B cell (primary cell): ENCODE measurements at regions of chr12 and their contacts with region 1.

Region 1: DNA sequence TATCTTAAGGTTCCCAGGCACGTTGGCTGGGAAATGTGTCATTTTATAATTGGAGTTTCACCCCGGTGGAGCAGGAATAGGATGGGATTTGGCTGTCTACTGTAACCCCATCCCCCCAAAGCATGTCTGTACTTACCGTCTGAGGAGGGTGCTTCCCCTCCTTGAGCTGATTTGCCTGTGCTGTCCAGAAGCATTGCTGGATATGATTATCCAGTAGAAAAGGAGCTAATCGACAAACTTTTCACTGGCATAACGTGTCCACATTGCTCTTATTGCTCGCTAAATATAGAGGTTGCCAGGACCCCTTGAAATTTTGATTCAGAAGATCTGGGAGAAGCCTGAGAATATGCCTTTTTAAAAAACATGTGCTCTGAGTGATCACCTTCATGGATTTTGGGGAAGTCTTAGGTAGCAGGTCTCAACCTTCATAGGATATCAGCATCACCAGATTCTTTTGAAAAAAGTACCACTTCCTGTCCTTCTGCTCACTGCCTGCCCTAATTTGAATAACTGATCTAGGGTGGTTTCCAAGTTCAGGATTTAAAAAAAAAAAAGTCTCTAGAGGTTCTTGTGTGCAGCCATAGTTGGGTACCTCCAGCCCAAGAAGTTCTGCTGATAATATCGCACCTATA is 80.4 kb upstream of the KCNA1 start:
- DNase-seq: peak; percentile 87
- ATAC-seq: peak; percentile 88
- H3K4me3 ChIP-seq: peak overlapping the region; percentile 17 to 61 (median 38)
- H3K4me3 Mint-ChIP-seq: peak overlapping the region; percentile 82
- H3K27ac ChIP-seq: peak overlapping the region; percentile 76 to 87
- H3K27ac Mint-ChIP-seq: peak overlapping the region; percentile 93
- H3K4me1 ChIP-seq: peaks cover 85% of the 10 kb centered on the region in 2 donors
- H3K4me1 Mint-ChIP-seq: peaks cover 85% of the 10 kb centered on the region
- H3K27me3 ChIP-seq: no peaks in the 10 kb centered on the region
- H3K27me3 Mint-ChIP-seq: no peaks in the 10 kb centered on the region
- CTCF ChIP-seq: no peak

Region 2: GRCh38 chr12:4562034-4562657 is 267.1 kb before region 1 on chr12 and contains the start of gene DYRK4:
- CTCF ChIA-PET with region 1: no interaction called
- POLR2A ChIA-PET with region 1: no interaction called
- intact Hi-C with region 1: loop called (anchors 10 kb)
- DNase-seq: peak; percentile 33
- ATAC-seq: no peak
- H3K4me3 ChIP-seq: peak within 1 kb of the TSS in 3 of 5 experiments; percentile 23 to 40 (median 35)
- H3K4me3 Mint-ChIP-seq: peak within 1 kb of the TSS; percentile 64
- H3K27ac ChIP-seq: no peak within 1 kb of the TSS
- H3K27ac Mint-ChIP-seq: peak within 1 kb of the TSS; percentile 27
- H3K4me1 ChIP-seq: peaks cover 44 to 52% of the 10 kb centered on the region in 2 donors
- H3K4me1 Mint-ChIP-seq: peaks cover 44% of the 10 kb centered on the region
- H3K27me3 ChIP-seq: no peaks in the 10 kb centered on the region
- H3K27me3 Mint-ChIP-seq: no peaks in the 10 kb centered on the region
- CTCF ChIP-seq: no peak
- total RNA-seq, gene DYRK4: 34.4 and 41.3 TPM in 2 replicates

Region 3: GRCh38 chr12:4630262-4630661 is 199.0 kb before region 1 on chr12:
- CTCF ChIA-PET with region 1: no interaction called
- POLR2A ChIA-PET with region 1: no interaction called
- intact Hi-C with region 1: no loop called
- DNase-seq: no peak
- ATAC-seq: no peak
- H3K4me3 ChIP-seq: no peak overlapping the region
- H3K4me3 Mint-ChIP-seq: no peak overlapping the region
- H3K27ac ChIP-seq: no peak overlapping the region
- H3K27ac Mint-ChIP-seq: no peak overlapping the region
- H3K4me1 ChIP-seq: no peaks in the 10 kb centered on the region
- H3K4me1 Mint-ChIP-seq: no peaks in the 10 kb centered on the region
- H3K27me3 ChIP-seq: no peaks in the 10 kb centered on the region
- H3K27me3 Mint-ChIP-seq: peaks cover 4% of the 10 kb centered on the region
- CTCF ChIP-seq: no peak

Region 4: GRCh38 chr12:4648501-4649357 is 180.5 kb before region 1 on chr12 and contains the starts of genes AKAP3 and NDUFA9:
- CTCF ChIA-PET with region 1: no interaction called
- POLR2A ChIA-PET with region 1: no interaction called
- intact Hi-C with region 1: loop called (anchors 5 kb)
- DNase-seq: peak; percentile 89
- ATAC-seq: peak; percentile 97
- H3K4me3 ChIP-seq: peak within 1 kb of the TSS; percentile 83 to 97 (median 90)
- H3K4me3 Mint-ChIP-seq: peak within 1 kb of the TSS; percentile 91
- H3K27ac ChIP-seq: peak within 1 kb of the TSS; percentile 62 to 83
- H3K27ac Mint-ChIP-seq: peak within 1 kb of the TSS; percentile 86
- H3K4me1 ChIP-seq: peaks cover 20 to 22% of the 10 kb centered on the region in 2 donors
- H3K4me1 Mint-ChIP-seq: peaks cover 52% of the 10 kb centered on the region
- H3K27me3 ChIP-seq: no peaks in the 10 kb centered on the region
- H3K27me3 Mint-ChIP-seq: no peaks in the 10 kb centered on the region
- CTCF ChIP-seq: no peak
- total RNA-seq, gene AKAP3: 3.8 and 4.6 TPM in 2 replicates
- total RNA-seq, gene NDUFA9: 73.3 and 74.2 TPM in 2 replicates

Region 5: DNA sequence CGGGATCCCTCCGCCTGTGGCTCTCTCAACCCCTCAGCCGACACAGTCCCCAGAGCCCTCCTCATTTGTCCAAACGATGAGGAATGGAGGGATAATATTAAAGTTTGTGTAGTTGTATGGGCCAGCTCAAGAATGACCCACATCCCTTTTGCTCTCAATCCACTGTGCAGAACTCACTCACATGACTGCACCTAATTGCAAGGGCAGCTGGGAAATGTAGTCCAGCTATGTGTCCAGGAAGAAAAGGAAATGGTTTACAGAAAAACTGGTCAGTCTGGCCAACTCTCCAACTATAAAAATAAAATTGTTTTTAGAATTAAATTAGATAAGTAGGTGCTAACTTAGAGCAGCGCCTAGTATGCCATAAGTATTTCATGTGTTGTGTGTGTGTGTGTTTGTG is 42.5 kb before region 1 on chr12:
- CTCF ChIA-PET with region 1: no interaction called
- POLR2A ChIA-PET with region 1: no interaction called
- intact Hi-C with region 1: no loop called
- DNase-seq: no peak
- ATAC-seq: no peak
- H3K4me3 ChIP-seq: no peak overlapping the region
- H3K4me3 Mint-ChIP-seq: no peak overlapping the region
- H3K27ac ChIP-seq: no peak overlapping the region
- H3K27ac Mint-ChIP-seq: no peak overlapping the region
- H3K4me1 ChIP-seq: no peaks in the 10 kb centered on the region
- H3K4me1 Mint-ChIP-seq: no peaks in the 10 kb centered on the region
- H3K27me3 ChIP-seq: peaks cover 0 to 2% (median 0%) of the 10 kb centered on the region in 4 experiments
- H3K27me3 Mint-ChIP-seq: peaks cover 41% of the 10 kb centered on the region
- CTCF ChIP-seq: no peak

Region 6: GRCh38 chr12:4849115-4849541 is 19.9 kb after region 1 on chr12:
- CTCF ChIA-PET with region 1: interaction called, 16 read pairs
- POLR2A ChIA-PET with region 1: no interaction called
- intact Hi-C with region 1: no loop called
- DNase-seq: peak; percentile 61
- ATAC-seq: peak; percentile 49
- H3K4me3 ChIP-seq: no peak overlapping the region
- H3K4me3 Mint-ChIP-seq: no peak overlapping the region
- H3K27ac ChIP-seq: no peak overlapping the region
- H3K27ac Mint-ChIP-seq: no peak overlapping the region
- H3K4me1 ChIP-seq: peaks cover 0 to 2% of the 10 kb centered on the region in 2 donors
- H3K4me1 Mint-ChIP-seq: peaks cover 3% of the 10 kb centered on the region
- H3K27me3 ChIP-seq: no peaks in the 10 kb centered on the region
- H3K27me3 Mint-ChIP-seq: peaks cover 3% of the 10 kb centered on the region
- CTCF ChIP-seq: peak; percentile 88